ENCODE measurements at regions of chr2 and their contacts with region 1.

Region 1: DNA sequence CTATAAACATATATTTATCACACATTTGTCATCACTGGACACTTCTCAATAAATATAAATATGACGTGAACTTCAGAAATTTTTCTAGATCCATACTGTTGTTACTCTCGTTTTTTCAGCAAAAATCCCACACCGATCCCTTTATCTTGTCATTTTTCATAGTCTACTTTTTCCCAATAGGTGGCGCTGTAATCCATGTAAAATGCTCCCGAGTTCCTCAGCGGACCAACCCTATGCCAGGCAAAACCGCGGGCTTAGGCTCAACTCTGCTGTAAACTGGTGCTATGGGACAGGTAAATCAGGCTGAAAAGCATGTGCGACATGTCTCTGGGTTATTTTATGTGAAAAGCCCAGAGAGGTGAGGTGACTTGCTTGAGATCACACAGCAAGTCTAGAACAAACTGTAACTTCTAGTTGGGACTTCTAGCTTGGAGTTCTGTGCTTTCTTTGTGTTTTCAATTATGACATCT is 104.0 kb downstream of the COBLL1 start:
- H3K4me3 ChIP-seq: no peak overlapping the region
- H3K27ac ChIP-seq: no peak overlapping the region
- H3K4me1 ChIP-seq: peaks cover 6% of the 10 kb centered on the region
- CTCF ChIP-seq: peak; percentile 52; the same call in 1 of the 2 replicates

Region 2: GRCh38 chr2:164841719-164842623 is 104.3 kb after region 1 on chr2 and contains the start of gene COBLL1:
- CTCF ChIA-PET with region 1: interaction called, 10 read pairs
- POLR2A ChIA-PET with region 1: interaction called, 5 read pairs
- H3K4me3 ChIP-seq: peak within 1 kb of the TSS; percentile 87
- H3K27ac ChIP-seq: peak within 1 kb of the TSS; percentile 95
- H3K4me1 ChIP-seq: peaks cover 21% of the 10 kb centered on the region
- CTCF ChIP-seq: peak; percentile 89

Region 3: GRCh38 chr2:164917296-164917903 is 179.8 kb after region 1 on chr2:
- CTCF ChIA-PET with region 1: interaction called, 10 read pairs
- POLR2A ChIA-PET with region 1: no interaction called
- H3K4me3 ChIP-seq: no peak overlapping the region
- H3K27ac ChIP-seq: no peak overlapping the region
- H3K4me1 ChIP-seq: peaks cover 3% of the 10 kb centered on the region; the same call in 1 of the 2 replicates
- CTCF ChIP-seq: peak; percentile 60

Region 4: GRCh38 chr2:165182029-165182428 is 444.4 kb after region 1 on chr2:
- CTCF ChIA-PET with region 1: no interaction called
- POLR2A ChIA-PET with region 1: no interaction called
- H3K4me3 ChIP-seq: no peak overlapping the region
- H3K27ac ChIP-seq: no peak overlapping the region
- H3K4me1 ChIP-seq: no peaks in the 10 kb centered on the region
- CTCF ChIP-seq: no peak

Measured in HEK293 (cell line).